A673 (cell line): ENCODE measurements at regions of chr9 and their contacts with region 1.

Region 1: DNA sequence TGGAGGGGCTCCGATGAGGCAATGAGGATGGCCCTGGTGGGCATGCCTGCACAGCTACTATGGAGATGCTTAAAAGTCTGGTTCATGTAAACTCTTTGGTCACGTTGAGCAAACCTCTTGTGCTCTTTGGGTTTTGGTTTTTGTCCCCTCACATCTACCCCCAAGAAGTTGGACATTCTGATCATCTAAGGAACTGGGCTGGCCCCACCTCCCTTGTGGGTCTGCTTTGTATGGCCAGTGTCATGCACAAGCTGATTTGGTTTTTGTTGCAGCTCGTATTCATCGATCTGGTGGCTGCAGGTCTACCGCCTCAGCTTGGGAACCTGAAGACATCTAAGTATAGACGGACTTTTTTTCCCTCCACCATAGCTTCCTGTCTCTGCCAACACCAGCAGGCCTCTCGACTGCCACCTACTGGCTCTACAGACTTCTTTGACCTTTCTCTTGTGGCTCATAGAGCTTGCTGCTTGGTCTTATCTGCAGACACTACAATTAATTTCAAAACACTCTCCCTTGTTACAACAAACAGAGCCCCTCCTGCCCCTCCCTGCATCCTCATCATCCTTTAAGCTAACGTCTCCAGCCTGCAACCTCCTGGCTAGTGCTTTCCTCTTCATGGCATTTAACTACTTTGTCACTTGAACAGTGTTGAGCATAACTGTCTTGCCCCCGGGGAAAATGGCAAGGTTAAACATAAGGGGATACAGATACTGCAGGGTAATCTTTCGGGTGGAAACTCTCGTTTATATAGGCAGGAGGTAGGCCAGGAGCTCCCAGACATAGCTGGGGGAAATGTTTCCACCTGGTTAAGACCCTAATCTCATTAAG is 34.5 kb downstream of the TSTD2 start:
- DNase-seq: peak; percentile 81
- H3K4me3 ChIP-seq: no peak overlapping the region
- H3K27ac ChIP-seq: no peak overlapping the region
- H3K4me1 ChIP-seq: no peaks in the 10 kb centered on the region
- H3K27me3 ChIP-seq: no peaks in the 10 kb centered on the region
- CTCF ChIP-seq: peak; percentile 87

Region 2: GRCh38 chr9:96856363-96857286 is 742.0 kb before region 1 on chr9:
- CTCF ChIA-PET with region 1: interaction called, 11 read pairs
- POLR2A ChIA-PET with region 1: no interaction called
- intact Hi-C with region 1: loop called (anchors 2 kb)
- DNase-seq: peak; percentile 83
- H3K4me3 ChIP-seq: no peak overlapping the region
- H3K27ac ChIP-seq: no peak overlapping the region
- H3K4me1 ChIP-seq: peaks cover 1% of the 10 kb centered on the region
- H3K27me3 ChIP-seq: no peaks in the 10 kb centered on the region
- CTCF ChIP-seq: peak; percentile 96

Region 3: DNA sequence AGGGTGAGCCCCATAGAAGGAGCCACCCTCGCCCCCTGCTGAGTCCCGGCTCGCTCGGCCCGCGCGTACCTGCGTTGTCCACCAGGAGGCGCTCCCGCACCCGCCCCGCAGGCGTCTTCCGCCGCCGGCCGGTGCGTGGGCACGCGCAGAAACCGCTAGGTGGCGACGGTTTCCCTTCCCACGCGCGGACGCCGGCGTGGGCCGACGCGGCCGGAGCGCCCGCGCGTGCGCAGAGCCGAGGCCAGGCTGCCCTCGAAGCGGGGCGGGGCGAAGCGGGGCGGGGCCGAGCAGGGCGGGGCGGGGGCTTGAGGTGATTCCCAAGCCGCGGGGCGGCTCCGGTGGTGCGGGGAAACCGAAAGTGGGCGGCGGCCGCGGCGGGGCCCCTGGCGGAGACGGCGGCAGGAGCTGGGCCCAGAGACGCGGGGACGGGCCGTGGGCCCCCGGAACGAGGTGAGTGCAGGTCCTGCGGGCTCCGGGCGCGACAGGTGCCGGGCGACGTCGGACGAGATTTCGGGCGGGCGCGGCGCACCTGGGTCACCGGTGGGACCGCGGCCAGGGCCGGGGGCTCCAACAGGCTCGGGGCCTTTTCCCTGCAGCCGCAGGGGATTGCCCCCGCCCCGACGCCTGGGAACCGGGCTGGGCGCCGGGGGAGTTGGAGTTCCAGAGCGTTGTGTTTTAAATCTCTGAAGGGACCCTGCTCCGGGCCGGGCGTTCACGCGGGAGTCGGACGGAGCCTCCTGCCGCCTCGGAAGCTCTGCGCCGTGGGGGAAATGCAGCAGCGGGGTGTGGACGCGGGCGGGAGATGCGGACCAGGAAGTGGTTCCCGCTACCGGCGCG is 186.7 kb before region 1 on chr9 and contains the start of gene TDRD7:
- CTCF ChIA-PET with region 1: interaction called, 7 read pairs
- POLR2A ChIA-PET with region 1: no interaction called
- intact Hi-C with region 1: loop called (anchors 1 kb)
- DNase-seq: peak; percentile 87
- H3K4me3 ChIP-seq: peak within 1 kb of the TSS; percentile 82
- H3K27ac ChIP-seq: no peak within 1 kb of the TSS
- H3K4me1 ChIP-seq: no peaks in the 10 kb centered on the region
- H3K27me3 ChIP-seq: peaks cover 5% of the 10 kb centered on the region
- CTCF ChIP-seq: peak; percentile 93
- total RNA-seq, gene TDRD7: 3.6 and 4.9 TPM in 2 replicates

Region 4: GRCh38 chr9:97468658-97469448 is 129.8 kb before region 1 on chr9:
- CTCF ChIA-PET with region 1: interaction called, 16 read pairs
- POLR2A ChIA-PET with region 1: no interaction called
- intact Hi-C with region 1: loop called (anchors 1 kb)
- DNase-seq: peak; percentile 60
- H3K4me3 ChIP-seq: no peak overlapping the region
- H3K27ac ChIP-seq: no peak overlapping the region
- H3K4me1 ChIP-seq: no peaks in the 10 kb centered on the region
- H3K27me3 ChIP-seq: no peaks in the 10 kb centered on the region
- CTCF ChIP-seq: peak; percentile 67

Region 5: GRCh38 chr9:97830884-97831829 is 232.5 kb after region 1 on chr9:
- CTCF ChIA-PET with region 1: no interaction called
- POLR2A ChIA-PET with region 1: no interaction called
- intact Hi-C with region 1: no loop called
- DNase-seq: no peak
- H3K4me3 ChIP-seq: no peak overlapping the region
- H3K27ac ChIP-seq: no peak overlapping the region
- H3K4me1 ChIP-seq: no peaks in the 10 kb centered on the region
- H3K27me3 ChIP-seq: peaks cover 52% of the 10 kb centered on the region
- CTCF ChIP-seq: no peak